Activated CD8-positive, alpha-beta T cell treated with anti-CD3 and anti-CD28 coated beads for 36 hours (primary cell): ENCODE measurements at regions of chr4 and their contacts with region 1.

Region 1: DNA sequence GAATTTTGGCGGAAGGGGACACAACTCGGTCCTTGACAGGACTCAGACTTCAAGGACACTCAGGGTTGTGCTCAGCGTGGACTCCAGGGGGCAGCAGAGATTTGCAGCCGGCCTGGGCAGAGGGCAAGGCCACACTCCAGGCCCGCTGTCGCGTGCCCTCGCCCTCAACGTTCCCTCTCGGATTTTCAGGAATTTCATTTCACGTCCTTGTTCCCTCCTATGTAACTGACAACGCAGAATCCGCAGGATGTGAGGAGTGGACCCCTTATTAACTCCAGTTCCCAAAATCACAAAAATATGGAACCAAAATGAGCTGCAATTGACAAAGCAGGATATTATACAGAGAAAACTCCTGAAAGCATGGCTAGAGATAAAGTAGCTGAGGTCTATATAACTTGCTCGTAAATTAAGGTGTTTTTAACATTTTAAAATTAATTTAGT is 21.0 kb upstream of the DCTD start:
- DNase-seq: peak; percentile 76
- ATAC-seq: peak; percentile 97
- H3K4me3 Mint-ChIP-seq: no peak overlapping the region
- H3K27ac Mint-ChIP-seq: no peak overlapping the region
- H3K4me1 Mint-ChIP-seq: no peaks in the 10 kb centered on the region
- H3K27me3 Mint-ChIP-seq: peaks cover 7% of the 10 kb centered on the region
- CTCF ChIP-seq: peak; percentile 91

Region 2: GRCh38 chr4:182752158-182752910 is 185.9 kb before region 1 on chr4:
- CTCF ChIA-PET with region 1: no interaction called
- POLR2A ChIA-PET with region 1: no interaction called
- intact Hi-C with region 1: no loop called
- DNase-seq: no peak
- ATAC-seq: no peak
- H3K4me3 Mint-ChIP-seq: no peak overlapping the region
- H3K27ac Mint-ChIP-seq: no peak overlapping the region
- H3K4me1 Mint-ChIP-seq: no peaks in the 10 kb centered on the region
- H3K27me3 Mint-ChIP-seq: peaks cover 1% of the 10 kb centered on the region
- CTCF ChIP-seq: no peak

Region 3: GRCh38 chr4:182917182-182918043 is 20.8 kb before region 1 on chr4 and contains the start of gene DCTD:
- CTCF ChIA-PET with region 1: interaction called, 10 read pairs
- POLR2A ChIA-PET with region 1: no interaction called
- intact Hi-C with region 1: no loop called
- DNase-seq: peak; percentile 86
- ATAC-seq: peak; percentile 75
- H3K4me3 Mint-ChIP-seq: peak within 1 kb of the TSS; percentile 88
- H3K27ac Mint-ChIP-seq: peak within 1 kb of the TSS; percentile 96
- H3K4me1 Mint-ChIP-seq: peaks cover 51% of the 10 kb centered on the region
- H3K27me3 Mint-ChIP-seq: no peaks in the 10 kb centered on the region
- CTCF ChIP-seq: peak; percentile 16
- total RNA-seq, gene DCTD: 128 to 131 TPM

Region 4: DNA sequence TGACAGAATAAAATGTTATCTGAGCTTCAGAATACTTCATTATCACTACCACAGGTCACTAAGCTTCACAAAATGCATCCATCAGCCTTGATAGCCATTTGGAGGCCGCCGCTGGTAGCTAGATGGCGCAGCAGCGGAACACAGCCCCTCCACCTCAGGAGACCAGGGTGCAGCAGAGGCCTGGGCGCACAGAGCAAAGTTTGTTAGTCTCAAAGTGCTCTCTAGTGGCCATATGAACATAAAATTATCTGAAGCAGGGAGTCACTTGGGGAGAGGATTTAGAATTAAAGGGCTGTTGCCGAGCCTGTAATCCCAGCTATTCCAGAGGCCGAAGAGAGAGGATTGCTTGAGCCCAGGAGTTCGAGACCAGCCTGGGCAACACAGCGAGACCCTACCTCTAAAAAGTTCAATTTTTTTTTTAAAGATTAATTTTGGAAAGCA is 12.9 kb before region 1 on chr4:
- CTCF ChIA-PET with region 1: interaction called, 34 read pairs
- POLR2A ChIA-PET with region 1: interaction called, 5 read pairs
- intact Hi-C with region 1: no loop called
- DNase-seq: peak; percentile 76
- ATAC-seq: peak; percentile 99
- H3K4me3 Mint-ChIP-seq: no peak overlapping the region
- H3K27ac Mint-ChIP-seq: no peak overlapping the region
- H3K4me1 Mint-ChIP-seq: no peaks in the 10 kb centered on the region
- H3K27me3 Mint-ChIP-seq: peaks cover 2% of the 10 kb centered on the region
- CTCF ChIP-seq: peak; percentile 64

Region 5: DNA sequence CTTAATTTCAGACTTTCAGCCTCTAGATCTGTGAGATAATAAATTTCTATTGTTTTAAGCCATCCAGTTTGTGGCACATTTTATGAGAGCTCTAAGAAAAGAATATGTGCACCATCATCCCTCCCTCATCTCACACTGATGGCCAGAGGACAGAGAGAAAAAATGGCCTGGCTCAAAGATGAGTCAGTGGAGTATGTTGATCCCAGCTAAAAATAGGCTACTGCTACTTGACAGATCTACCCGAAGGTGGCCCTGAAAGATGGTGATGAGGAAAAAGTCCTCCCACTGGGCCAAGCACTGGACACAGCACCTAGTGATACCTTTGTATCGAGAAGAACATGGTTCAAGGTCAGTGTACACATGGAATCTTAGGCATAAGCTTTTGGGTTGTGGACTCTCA is 17.2 kb after region 1 on chr4:
- CTCF ChIA-PET with region 1: interaction called, 12 read pairs
- POLR2A ChIA-PET with region 1: no interaction called
- intact Hi-C with region 1: no loop called
- DNase-seq: no peak
- ATAC-seq: no peak
- H3K4me3 Mint-ChIP-seq: no peak overlapping the region
- H3K27ac Mint-ChIP-seq: no peak overlapping the region
- H3K4me1 Mint-ChIP-seq: no peaks in the 10 kb centered on the region
- H3K27me3 Mint-ChIP-seq: peaks cover 2% of the 10 kb centered on the region
- CTCF ChIP-seq: no peak

Region 6: DNA sequence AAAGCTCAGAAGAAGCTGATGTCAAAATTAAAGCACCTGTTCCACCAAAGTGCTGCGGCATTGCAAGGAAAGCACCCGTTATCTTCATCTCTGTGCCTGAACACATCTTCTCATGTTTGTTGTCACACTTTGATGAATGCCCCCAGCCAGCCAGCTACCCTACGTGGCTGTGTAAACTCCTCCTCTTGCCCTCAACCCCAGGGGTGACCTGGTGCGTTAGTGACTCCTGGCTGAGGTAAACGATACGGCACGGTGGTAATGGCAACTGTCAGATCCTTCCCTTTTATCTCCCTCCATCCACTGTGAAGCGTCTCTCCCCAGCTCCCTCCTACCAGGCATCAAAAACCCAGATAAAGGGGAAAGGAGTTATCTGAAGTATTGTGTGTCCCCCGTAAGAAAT is 70.3 kb after region 1 on chr4:
- CTCF ChIA-PET with region 1: no interaction called
- POLR2A ChIA-PET with region 1: no interaction called
- intact Hi-C with region 1: no loop called
- DNase-seq: no peak
- ATAC-seq: no peak
- H3K4me3 Mint-ChIP-seq: no peak overlapping the region
- H3K27ac Mint-ChIP-seq: no peak overlapping the region
- H3K4me1 Mint-ChIP-seq: no peaks in the 10 kb centered on the region
- H3K27me3 Mint-ChIP-seq: peaks cover 16% of the 10 kb centered on the region
- CTCF ChIP-seq: no peak

Region 7: DNA sequence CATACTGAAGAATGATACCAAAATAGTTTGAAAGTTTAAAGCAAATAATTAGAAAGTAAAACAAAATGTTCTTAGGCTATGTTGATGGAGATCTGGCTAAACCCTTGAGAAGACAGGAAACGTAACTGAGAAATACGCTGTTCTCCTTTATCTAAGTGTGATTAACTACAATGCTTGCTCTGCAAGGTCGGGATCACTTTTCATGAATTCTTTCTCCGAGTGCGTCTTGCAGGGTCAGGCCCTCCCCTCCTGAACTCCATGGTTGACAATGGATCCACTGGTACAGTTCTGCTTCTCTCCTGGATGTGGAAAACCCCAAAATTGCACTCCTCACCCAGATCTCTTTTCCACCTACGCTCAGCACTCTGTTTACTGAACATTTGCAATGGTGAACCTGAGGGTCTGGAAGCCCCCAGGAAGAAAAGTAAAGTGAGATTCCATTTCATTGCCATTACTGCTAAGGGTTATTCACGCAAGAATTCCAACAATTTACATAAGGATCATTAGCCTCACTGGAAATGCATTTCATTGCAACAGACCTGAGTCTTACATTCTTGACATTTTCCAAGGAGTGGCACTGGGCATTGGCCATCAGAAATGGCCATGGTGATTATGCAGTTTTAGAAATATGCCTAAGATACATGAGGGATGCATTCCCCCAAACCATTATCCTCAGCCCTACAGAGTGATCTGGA is 136.2 kb after region 1 on chr4:
- CTCF ChIA-PET with region 1: interaction called, 12 read pairs
- POLR2A ChIA-PET with region 1: no interaction called
- intact Hi-C with region 1: loop called (anchors 5 kb)
- DNase-seq: no peak
- ATAC-seq: no peak
- H3K4me3 Mint-ChIP-seq: no peak overlapping the region
- H3K27ac Mint-ChIP-seq: no peak overlapping the region
- H3K4me1 Mint-ChIP-seq: no peaks in the 10 kb centered on the region
- H3K27me3 Mint-ChIP-seq: peaks cover 9% of the 10 kb centered on the region
- CTCF ChIP-seq: no peak

Region 8: GRCh38 chr4:183142571-183143550 is 204.6 kb after region 1 on chr4:
- CTCF ChIA-PET with region 1: no interaction called
- POLR2A ChIA-PET with region 1: no interaction called
- intact Hi-C with region 1: no loop called
- DNase-seq: no peak
- ATAC-seq: no peak
- H3K4me3 Mint-ChIP-seq: no peak overlapping the region
- H3K27ac Mint-ChIP-seq: no peak overlapping the region
- H3K4me1 Mint-ChIP-seq: no peaks in the 10 kb centered on the region
- H3K27me3 Mint-ChIP-seq: peaks cover 9% of the 10 kb centered on the region
- CTCF ChIP-seq: no peak

Region 9: GRCh38 chr4:183249857-183250256 is 311.6 kb after region 1 on chr4:
- CTCF ChIA-PET with region 1: interaction called, 46 read pairs
- POLR2A ChIA-PET with region 1: no interaction called
- intact Hi-C with region 1: no loop called
- DNase-seq: peak; percentile 44
- ATAC-seq: no peak
- H3K4me3 Mint-ChIP-seq: no peak overlapping the region
- H3K27ac Mint-ChIP-seq: no peak overlapping the region
- H3K4me1 Mint-ChIP-seq: no peaks in the 10 kb centered on the region
- H3K27me3 Mint-ChIP-seq: no peaks in the 10 kb centered on the region
- CTCF ChIP-seq: no peak

Region 10: DNA sequence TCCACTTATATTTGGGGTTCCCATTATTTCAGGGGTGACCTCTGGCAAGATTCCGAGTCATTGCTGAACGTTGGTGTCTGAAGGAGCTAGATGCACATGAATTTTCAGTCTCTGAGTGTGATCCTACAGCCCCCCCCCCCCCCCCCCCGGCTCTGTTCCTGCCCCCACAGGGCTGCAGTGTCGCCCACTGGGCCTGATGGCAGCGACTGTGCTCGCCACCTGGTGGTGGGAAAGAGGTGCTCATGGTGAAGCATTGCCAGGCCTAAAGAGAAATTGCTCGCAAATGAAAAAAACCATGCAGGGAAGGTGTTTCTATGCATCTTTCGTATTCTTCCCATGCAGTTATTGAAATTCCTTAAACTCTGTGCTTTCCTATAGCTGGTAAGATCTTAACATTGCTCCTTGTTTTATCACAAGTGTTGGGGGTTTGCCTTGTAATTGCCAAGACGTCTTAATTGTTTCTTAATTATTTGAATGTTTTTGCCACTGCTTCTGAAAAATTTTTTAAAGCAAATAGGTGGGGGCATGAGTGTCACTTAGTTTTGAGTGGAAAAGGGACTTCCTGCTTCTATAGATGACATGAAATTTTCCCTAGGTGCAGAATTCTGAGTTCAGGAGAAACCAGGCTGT is 318.6 kb after region 1 on chr4:
- CTCF ChIA-PET with region 1: interaction called, 73 read pairs
- POLR2A ChIA-PET with region 1: no interaction called
- intact Hi-C with region 1: loop called (anchors 1 kb)
- DNase-seq: peak; percentile 64
- ATAC-seq: peak; percentile 60
- H3K4me3 Mint-ChIP-seq: no peak overlapping the region
- H3K27ac Mint-ChIP-seq: no peak overlapping the region
- H3K4me1 Mint-ChIP-seq: no peaks in the 10 kb centered on the region
- H3K27me3 Mint-ChIP-seq: no peaks in the 10 kb centered on the region
- CTCF ChIP-seq: peak; percentile 68